Activated CD4-positive, alpha-beta memory T cell treated with anti-CD3 and anti-CD28 coated beads for 36 hours (primary cell): ENCODE measurements at regions of chrX and their contacts with region 1.

Region 1: GRCh38 chrX:12946838-12947544 is 27.9 kb upstream of the TMSB4X start:
- DNase-seq: peak; percentile 80
- H3K4me3 Mint-ChIP-seq: peak overlapping the region; percentile 57
- H3K27ac Mint-ChIP-seq: peak overlapping the region; percentile 96
- H3K4me1 Mint-ChIP-seq: peaks cover 55% of the 10 kb centered on the region
- H3K27me3 Mint-ChIP-seq: no peaks in the 10 kb centered on the region

Region 2: DNA sequence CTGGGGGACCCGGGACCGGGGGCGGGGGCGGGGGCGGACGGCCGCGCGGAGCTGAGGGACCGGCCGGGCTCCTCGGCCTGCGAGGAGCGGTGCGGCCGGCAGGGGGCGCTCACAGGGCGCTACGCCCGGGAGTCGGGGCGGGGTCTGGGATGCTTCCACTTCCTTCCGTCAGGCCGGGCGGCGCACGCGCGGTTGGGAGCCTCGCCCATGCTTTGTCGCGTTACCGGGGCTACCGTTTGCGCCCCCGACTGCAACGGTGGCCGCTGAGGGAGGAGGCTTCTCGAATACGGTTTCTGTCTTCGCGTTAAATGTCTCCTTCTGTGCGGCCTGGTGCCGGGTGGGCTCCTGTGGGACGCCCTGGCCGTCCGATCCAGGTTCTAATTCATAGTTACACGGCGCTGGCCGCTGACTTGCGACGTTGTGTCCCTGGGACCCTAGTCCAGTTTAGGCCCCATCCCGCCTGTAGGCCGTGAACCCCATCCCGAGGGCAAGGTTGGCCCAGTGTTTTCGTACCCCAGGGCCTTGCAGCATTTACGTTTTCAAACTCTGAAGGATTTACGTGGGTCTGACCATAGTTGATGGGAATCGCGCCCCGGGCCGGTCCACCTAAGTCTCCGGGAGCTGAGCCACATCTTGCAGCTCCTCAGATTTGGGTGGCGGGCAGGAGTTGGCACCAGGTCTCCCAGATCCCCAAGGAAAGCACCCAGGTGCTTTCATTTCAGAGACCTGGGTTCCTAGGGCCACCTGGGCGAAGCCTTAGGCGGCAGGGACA is 1188.4 kb before region 1 on chrX:
- CTCF ChIA-PET with region 1: no interaction called
- POLR2A ChIA-PET with region 1: no interaction called
- intact Hi-C with region 1: loop called (anchors 5 kb)
- DNase-seq: peak; percentile 92
- H3K4me3 Mint-ChIP-seq: peak overlapping the region; percentile 95
- H3K27ac Mint-ChIP-seq: peak overlapping the region; percentile 99
- H3K4me1 Mint-ChIP-seq: peaks cover 23% of the 10 kb centered on the region
- H3K27me3 Mint-ChIP-seq: peaks cover under 1% of the 10 kb centered on the region

Region 3: DNA sequence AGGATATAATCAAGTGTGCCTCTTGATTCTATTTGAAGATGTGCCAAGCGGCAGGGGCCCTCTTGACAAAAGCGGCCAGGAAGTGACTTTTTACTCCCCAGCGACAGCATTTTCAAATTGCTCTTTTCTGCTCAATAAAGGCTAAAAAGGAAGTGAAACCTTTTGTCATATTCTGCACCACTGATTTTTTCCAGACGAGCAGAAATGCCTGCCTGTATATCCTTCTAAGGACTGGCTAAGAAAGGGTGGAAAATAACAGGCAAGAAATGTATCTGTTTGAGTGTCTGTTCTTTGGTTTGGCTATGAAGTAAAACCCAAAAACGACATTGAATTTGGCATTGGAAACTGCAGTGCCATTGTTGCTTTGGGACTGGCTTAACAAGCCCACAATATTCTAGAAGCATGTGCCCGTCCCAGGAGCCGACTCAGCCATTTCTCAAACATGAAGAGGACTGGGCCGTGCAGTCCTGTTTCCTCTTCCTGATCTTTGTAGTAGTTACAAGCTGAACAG is 53.4 kb after region 1 on chrX:
- CTCF ChIA-PET with region 1: interaction called, 22 read pairs
- POLR2A ChIA-PET with region 1: interaction called, 6 read pairs
- intact Hi-C with region 1: loop called (anchors 1 kb)
- DNase-seq: peak; percentile 59
- H3K4me3 Mint-ChIP-seq: peak overlapping the region; percentile 60
- H3K27ac Mint-ChIP-seq: peak overlapping the region; percentile 94
- H3K4me1 Mint-ChIP-seq: peaks cover 70% of the 10 kb centered on the region
- H3K27me3 Mint-ChIP-seq: no peaks in the 10 kb centered on the region

Region 4: DNA sequence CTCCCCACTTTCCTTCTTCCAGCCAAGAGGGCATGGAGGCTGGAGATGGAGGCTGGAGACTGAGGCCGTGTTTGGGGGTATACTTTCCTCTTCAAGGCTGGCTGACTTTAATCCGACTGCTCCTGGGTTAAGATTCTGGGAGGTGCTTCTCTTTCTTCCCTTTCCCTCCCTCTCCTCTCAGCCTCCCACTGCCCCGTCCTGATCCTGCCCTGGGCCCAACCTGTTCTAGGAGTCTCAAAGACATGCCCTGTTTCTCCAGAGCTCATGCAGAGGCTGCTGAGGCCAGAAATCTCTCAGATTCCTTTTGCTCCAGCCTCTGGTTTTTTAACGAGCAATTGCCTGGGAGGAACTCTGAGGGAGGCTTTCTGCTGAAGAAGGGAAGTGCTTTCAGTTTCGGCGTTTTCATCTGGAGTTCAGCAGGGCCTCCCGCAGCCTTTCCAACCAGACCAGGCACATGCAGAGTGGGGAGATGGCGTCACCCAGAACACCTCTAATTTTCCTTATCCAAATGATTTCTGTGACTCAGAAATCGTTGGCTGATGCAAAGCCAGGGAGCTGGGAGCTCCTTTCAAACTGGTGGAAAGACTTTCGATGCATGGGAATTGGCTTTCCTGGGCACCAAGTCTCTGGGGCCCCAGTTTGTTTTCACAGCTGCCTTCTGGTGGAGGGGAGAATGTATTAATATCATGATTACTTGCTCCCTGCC is 131.9 kb after region 1 on chrX:
- CTCF ChIA-PET with region 1: interaction called, 10 read pairs
- POLR2A ChIA-PET with region 1: interaction called, 8 read pairs
- intact Hi-C with region 1: no loop called
- DNase-seq: peak; percentile 20
- H3K4me3 Mint-ChIP-seq: peak overlapping the region; percentile 33
- H3K27ac Mint-ChIP-seq: peak overlapping the region; percentile 43
- H3K4me1 Mint-ChIP-seq: peaks cover 88% of the 10 kb centered on the region
- H3K27me3 Mint-ChIP-seq: no peaks in the 10 kb centered on the region

Region 5: DNA sequence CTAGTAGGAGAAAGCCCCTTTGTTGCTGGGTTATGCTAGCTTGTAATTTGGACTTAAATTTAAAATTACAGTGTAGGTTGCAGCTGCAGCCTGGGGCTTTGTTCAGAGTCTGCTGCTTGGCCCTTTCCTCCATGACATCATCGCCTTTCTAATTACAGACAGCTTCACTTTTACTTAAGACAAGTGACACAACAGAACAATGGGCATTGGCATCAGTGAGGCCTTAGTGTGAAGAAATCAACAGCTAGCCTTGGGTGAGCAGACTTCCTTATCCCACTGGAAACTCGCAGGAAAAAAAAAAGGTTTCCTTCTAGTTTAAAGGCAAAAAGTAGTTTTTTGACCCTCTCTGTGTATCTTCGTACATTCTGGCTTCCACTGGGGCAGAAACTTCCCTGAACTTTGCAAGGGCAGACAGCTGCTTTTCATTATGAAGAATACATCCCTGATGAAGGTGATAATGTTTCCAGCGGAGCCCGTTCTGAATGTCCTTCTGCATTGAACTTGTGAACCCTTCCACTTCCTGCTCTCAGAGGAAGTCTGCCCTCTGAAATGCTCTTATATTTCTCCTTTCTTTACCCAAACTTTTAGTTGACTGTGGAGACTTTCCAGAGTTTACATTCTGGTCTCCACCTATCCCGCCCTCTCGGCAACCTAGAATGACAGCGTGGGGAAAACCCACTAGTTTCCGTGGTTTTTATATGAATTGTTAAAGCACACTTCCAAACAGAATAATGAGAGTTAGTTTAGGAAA is 220.7 kb after region 1 on chrX:
- CTCF ChIA-PET with region 1: interaction called, 7 read pairs
- POLR2A ChIA-PET with region 1: no interaction called
- intact Hi-C with region 1: loop called (anchors 5 kb)
- DNase-seq: peak; percentile 34
- H3K4me3 Mint-ChIP-seq: peak overlapping the region; percentile 30
- H3K27ac Mint-ChIP-seq: peak overlapping the region; percentile 65
- H3K4me1 Mint-ChIP-seq: peaks cover 19% of the 10 kb centered on the region
- H3K27me3 Mint-ChIP-seq: no peaks in the 10 kb centered on the region

Region 6: GRCh38 chrX:13376857-13377549 is 430.0 kb after region 1 on chrX:
- CTCF ChIA-PET with region 1: interaction called, 6 read pairs
- POLR2A ChIA-PET with region 1: no interaction called
- intact Hi-C with region 1: loop called (anchors 10 kb)
- DNase-seq: peak; percentile 31
- H3K4me3 Mint-ChIP-seq: no peak overlapping the region
- H3K27ac Mint-ChIP-seq: no peak overlapping the region
- H3K4me1 Mint-ChIP-seq: peaks cover 35% of the 10 kb centered on the region
- H3K27me3 Mint-ChIP-seq: no peaks in the 10 kb centered on the region

Region 7: GRCh38 chrX:13653022-13653693 is 706.2 kb after region 1 on chrX and contains the start of gene TCEANC:
- CTCF ChIA-PET with region 1: no interaction called
- POLR2A ChIA-PET with region 1: no interaction called
- intact Hi-C with region 1: loop called (anchors 5 kb)
- DNase-seq: peak; percentile 96
- H3K4me3 Mint-ChIP-seq: peak within 1 kb of the TSS; percentile 84
- H3K27ac Mint-ChIP-seq: peak within 1 kb of the TSS; percentile 93
- H3K4me1 Mint-ChIP-seq: peaks cover 22% of the 10 kb centered on the region
- H3K27me3 Mint-ChIP-seq: no peaks in the 10 kb centered on the region
- total RNA-seq, gene TCEANC: 1.9 TPM